Activated B cell treated with CpG ODN at 0.5 μM for 24 hours (primary cell): ENCODE measurements at regions of chr12 and their contacts with region 1.

Region 1: DNA sequence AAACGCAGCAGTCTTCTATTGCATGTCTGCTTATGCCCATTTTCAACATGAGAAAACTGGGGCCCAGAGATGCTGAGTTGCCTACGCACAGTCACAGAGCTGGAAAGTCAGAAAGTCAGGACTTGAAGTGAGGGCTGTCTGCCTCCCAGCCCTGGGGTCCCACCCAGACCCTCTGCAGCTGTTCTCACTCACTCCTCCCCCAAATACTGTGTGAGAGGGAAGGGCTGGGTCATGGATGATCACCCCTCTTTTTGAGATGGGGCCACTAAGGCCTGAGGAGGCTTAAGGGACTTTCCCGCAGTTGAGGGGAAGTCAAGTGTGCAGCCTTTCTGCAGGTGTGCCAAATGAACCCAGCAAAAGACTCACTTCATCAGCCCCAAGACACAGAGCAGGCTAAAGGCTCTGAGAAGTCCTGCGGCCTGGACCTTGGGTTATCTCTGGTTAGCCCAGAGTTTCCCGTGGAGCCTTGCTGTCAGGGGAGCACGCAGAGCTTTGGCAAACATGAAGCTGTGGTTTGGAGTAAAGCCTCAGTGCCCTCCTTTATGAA is 18.7 kb downstream of the DTX1 start:
- DNase-seq: peak; percentile 59
- ATAC-seq: peak; percentile 88
- H3K4me3 Mint-ChIP-seq: peak overlapping the region; percentile 62
- H3K27ac Mint-ChIP-seq: peak overlapping the region; percentile 85
- H3K4me1 Mint-ChIP-seq: peaks cover 93% of the 10 kb centered on the region
- H3K27me3 Mint-ChIP-seq: no peaks in the 10 kb centered on the region
- CTCF ChIP-seq: no peak

Region 2: DNA sequence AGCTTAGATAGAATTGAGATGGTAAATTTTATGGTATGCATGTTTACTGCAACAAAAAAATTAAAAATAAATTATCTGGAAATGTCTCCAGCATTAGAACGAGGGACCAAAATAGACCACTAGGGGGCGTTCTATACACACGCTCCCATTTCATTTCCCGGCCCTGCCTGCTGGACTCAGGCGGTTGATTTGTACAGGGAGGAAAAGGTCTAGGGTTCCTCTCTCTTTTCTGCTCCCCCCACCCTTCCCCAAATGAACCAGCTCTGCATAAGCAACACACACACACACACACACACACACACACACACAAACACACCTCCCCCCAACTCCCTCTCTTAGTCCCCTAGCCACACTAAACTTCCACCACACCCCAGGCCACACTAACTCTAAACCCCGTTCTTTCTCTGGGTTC is 26.5 kb before region 1 on chr12:
- CTCF ChIA-PET with region 1: interaction called, 10 read pairs
- POLR2A ChIA-PET with region 1: interaction called, 160 read pairs
- intact Hi-C with region 1: loop called (anchors 1 kb)
- DNase-seq: no peak
- ATAC-seq: peak; percentile 43
- H3K4me3 Mint-ChIP-seq: no peak overlapping the region
- H3K27ac Mint-ChIP-seq: peak overlapping the region; percentile 75
- H3K4me1 Mint-ChIP-seq: peaks cover 50% of the 10 kb centered on the region
- H3K27me3 Mint-ChIP-seq: no peaks in the 10 kb centered on the region
- CTCF ChIP-seq: no peak

Region 3: DNA sequence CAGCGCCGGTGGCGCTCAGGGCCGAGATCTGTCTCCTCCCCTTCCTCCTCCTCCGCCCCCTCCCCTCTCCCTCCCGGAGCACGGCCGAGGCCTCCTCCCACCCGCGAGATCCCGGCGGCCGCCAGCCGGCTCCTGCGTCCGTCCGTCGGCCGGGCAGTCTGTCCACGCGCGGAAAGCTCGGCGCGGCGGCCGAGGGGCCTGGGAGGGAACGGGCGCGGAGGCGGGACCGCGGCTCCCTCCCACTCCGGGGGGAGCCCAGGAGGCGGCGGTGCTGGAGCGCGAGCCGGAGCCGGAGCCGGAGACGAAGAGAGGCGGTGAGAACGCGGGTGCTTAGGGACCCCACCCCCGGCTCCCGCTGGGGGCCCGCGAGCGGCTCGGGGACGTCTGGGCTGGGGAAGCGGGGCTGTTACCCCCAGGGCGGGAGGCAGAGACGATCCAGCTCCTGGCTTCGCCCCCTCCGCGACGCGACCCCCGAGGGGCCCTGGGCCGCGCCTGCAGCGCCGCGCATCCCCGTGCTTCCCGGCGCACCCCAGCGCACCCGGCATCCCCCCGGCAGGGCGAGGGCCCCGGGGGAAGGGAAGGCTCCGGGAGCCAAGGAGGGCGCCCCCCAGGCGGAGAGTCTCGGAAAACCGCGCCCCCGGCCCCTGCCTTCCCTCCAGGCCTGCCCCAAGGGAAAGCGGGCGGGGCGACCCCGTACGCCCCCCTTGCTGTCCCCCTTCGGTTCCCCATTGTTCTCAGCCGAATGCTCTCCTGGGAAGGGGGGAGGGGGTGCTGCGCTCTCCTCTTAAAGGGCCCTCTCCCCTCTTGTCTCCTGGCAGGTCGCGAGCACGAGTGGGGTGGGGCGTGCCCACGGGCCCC is 18.4 kb before region 1 on chr12 and contains the start of gene DTX1:
- CTCF ChIA-PET with region 1: no interaction called
- POLR2A ChIA-PET with region 1: interaction called, 160 read pairs
- intact Hi-C with region 1: loop called (anchors 1 kb)
- DNase-seq: no peak
- ATAC-seq: peak; percentile 55
- H3K4me3 Mint-ChIP-seq: peak within 1 kb of the TSS; percentile 81
- H3K27ac Mint-ChIP-seq: peak within 1 kb of the TSS; percentile 78
- H3K4me1 Mint-ChIP-seq: peaks cover 46% of the 10 kb centered on the region
- H3K27me3 Mint-ChIP-seq: no peaks in the 10 kb centered on the region
- CTCF ChIP-seq: no peak
- total RNA-seq, gene DTX1: 75.3 and 79.4 TPM in 2 replicates

Region 4: DNA sequence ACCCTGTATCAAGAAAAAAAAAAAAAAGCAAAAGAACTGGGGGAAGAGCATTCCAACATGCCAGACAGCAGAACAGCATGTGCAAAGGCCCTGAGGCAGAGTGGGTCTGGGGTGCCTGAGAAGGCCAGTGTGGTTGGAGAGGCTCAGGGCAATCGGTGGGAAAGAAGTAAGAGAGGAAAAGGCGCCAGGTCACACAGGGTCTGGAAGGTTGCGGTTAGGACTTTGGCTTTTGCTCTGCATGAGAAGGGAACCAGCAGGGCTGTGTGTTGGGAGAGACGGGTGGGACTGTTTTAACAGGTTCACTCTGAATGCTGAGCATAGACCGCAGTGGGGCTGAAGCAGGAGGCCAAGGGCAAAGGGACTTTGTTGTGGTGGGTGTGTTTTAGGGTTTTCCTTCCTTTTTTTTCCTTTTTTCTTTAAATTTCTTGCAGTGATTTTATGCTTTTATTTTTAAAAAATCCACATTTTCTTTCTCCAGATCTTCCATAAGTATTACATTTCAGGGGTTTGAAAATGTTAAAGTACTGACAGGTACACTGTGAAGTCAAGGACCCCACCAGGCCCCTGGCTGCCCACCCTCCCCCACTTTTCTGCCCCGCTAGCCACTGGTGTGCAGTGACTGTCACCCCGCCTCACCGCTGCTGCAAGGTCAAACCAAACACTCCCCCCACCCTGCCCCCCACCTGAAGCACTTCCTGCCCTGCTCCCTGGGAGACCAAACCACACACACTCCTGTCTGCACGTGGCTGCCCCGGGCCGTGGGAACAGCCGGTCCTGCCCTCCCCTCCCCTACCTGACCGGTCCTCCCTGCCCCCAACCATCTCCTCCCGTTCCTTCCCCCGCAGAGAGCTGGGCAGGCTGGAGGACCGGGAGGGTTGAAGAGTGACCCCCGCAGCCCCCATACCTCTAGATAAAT is 11.3 kb after region 1 on chr12:
- CTCF ChIA-PET with region 1: no interaction called
- POLR2A ChIA-PET with region 1: interaction called, 9 read pairs
- intact Hi-C with region 1: loop called (anchors 1 kb)
- DNase-seq: no peak
- ATAC-seq: peak; percentile 10
- H3K4me3 Mint-ChIP-seq: peak overlapping the region; percentile 71
- H3K27ac Mint-ChIP-seq: peak overlapping the region; percentile 81
- H3K4me1 Mint-ChIP-seq: peaks cover 96% of the 10 kb centered on the region
- H3K27me3 Mint-ChIP-seq: no peaks in the 10 kb centered on the region
- CTCF ChIP-seq: no peak

Region 5: GRCh38 chr12:113092607-113093408 is 17.6 kb after region 1 on chr12:
- CTCF ChIA-PET with region 1: interaction called, 10 read pairs
- POLR2A ChIA-PET with region 1: interaction called, 9 read pairs
- intact Hi-C with region 1: loop called (anchors 1 kb)
- DNase-seq: no peak
- ATAC-seq: peak; percentile 65
- H3K4me3 Mint-ChIP-seq: peak overlapping the region; percentile 80
- H3K27ac Mint-ChIP-seq: peak overlapping the region; percentile 82
- H3K4me1 Mint-ChIP-seq: peaks cover 55% of the 10 kb centered on the region
- H3K27me3 Mint-ChIP-seq: no peaks in the 10 kb centered on the region
- CTCF ChIP-seq: no peak

Region 6: GRCh38 chr12:113184900-113185773 is 109.9 kb after region 1 on chr12 and contains the starts of genes DDX54 and RITA1:
- CTCF ChIA-PET with region 1: no interaction called
- POLR2A ChIA-PET with region 1: no interaction called
- intact Hi-C with region 1: loop called (anchors 1 kb)
- DNase-seq: peak; percentile 87
- ATAC-seq: peak; percentile 83
- H3K4me3 Mint-ChIP-seq: peak within 1 kb of the TSS; percentile 93
- H3K27ac Mint-ChIP-seq: peak within 1 kb of the TSS; percentile 94
- H3K4me1 Mint-ChIP-seq: peaks cover 39% of the 10 kb centered on the region
- H3K27me3 Mint-ChIP-seq: no peaks in the 10 kb centered on the region
- CTCF ChIP-seq: no peak
- total RNA-seq, gene DDX54: 115 TPM in 2 replicates
- total RNA-seq, gene RITA1: 15.5 and 18.2 TPM in 2 replicates

Region 7: GRCh38 chr12:113232840-113233585 is 157.8 kb after region 1 on chr12:
- CTCF ChIA-PET with region 1: no interaction called
- POLR2A ChIA-PET with region 1: no interaction called
- intact Hi-C with region 1: loop called (anchors 5 kb)
- DNase-seq: peak; percentile 73
- ATAC-seq: peak; percentile 78
- H3K4me3 Mint-ChIP-seq: peak overlapping the region; percentile 76
- H3K27ac Mint-ChIP-seq: peak overlapping the region; percentile 95
- H3K4me1 Mint-ChIP-seq: peaks cover 87% of the 10 kb centered on the region
- H3K27me3 Mint-ChIP-seq: no peaks in the 10 kb centered on the region
- CTCF ChIP-seq: no peak